Keratinocyte (primary cell): ENCODE measurements at regions of chr9 and their contacts with region 1.

Region 1: GRCh38 chr9:91914405-91914804 is 35.6 kb downstream of the ROR2 start:
- DNase-seq: no peak
- H3K4me3 ChIP-seq: no peak overlapping the region
- H3K27ac ChIP-seq: no peak overlapping the region
- H3K4me1 ChIP-seq: no peaks in the 10 kb centered on the region
- H3K27me3 ChIP-seq: peaks cover 3% of the 10 kb centered on the region
- CTCF ChIP-seq: no peak

Region 2: GRCh38 chr9:91963711-91964240 is 49.4 kb after region 1 on chr9:
- dilution Hi-C with region 1: loop called (anchors 5 kb)
- DNase-seq: peak; percentile 62
- H3K4me3 ChIP-seq: no peak overlapping the region
- H3K27ac ChIP-seq: no peak overlapping the region
- H3K4me1 ChIP-seq: no peaks in the 10 kb centered on the region
- H3K27me3 ChIP-seq: no peaks in the 10 kb centered on the region
- CTCF ChIP-seq: no peak

Region 3: GRCh38 chr9:91992461-91993041 is 78.1 kb after region 1 on chr9:
- dilution Hi-C with region 1: no loop called
- DNase-seq: no peak
- H3K4me3 ChIP-seq: no peak overlapping the region
- H3K27ac ChIP-seq: no peak overlapping the region
- H3K4me1 ChIP-seq: no peaks in the 10 kb centered on the region
- H3K27me3 ChIP-seq: peaks cover 18% of the 10 kb centered on the region
- CTCF ChIP-seq: no peak